ENCODE measurements at regions of chr22 and their contacts with region 1.

Region 1: GRCh38 chr22:41381329-41382097 is at the start of gene TEF:
- DNase-seq: peak; percentile 98
- ATAC-seq: peak; percentile 94
- H3K4me3 Mint-ChIP-seq: peak within 1 kb of the TSS; percentile 79
- H3K27ac Mint-ChIP-seq: peak within 1 kb of the TSS; percentile 91
- H3K4me1 Mint-ChIP-seq: peaks cover 10% of the 10 kb centered on the region
- H3K27me3 Mint-ChIP-seq: no peaks in the 10 kb centered on the region
- total RNA-seq, gene TEF: 1.7 to 2.2 TPM

Region 2: DNA sequence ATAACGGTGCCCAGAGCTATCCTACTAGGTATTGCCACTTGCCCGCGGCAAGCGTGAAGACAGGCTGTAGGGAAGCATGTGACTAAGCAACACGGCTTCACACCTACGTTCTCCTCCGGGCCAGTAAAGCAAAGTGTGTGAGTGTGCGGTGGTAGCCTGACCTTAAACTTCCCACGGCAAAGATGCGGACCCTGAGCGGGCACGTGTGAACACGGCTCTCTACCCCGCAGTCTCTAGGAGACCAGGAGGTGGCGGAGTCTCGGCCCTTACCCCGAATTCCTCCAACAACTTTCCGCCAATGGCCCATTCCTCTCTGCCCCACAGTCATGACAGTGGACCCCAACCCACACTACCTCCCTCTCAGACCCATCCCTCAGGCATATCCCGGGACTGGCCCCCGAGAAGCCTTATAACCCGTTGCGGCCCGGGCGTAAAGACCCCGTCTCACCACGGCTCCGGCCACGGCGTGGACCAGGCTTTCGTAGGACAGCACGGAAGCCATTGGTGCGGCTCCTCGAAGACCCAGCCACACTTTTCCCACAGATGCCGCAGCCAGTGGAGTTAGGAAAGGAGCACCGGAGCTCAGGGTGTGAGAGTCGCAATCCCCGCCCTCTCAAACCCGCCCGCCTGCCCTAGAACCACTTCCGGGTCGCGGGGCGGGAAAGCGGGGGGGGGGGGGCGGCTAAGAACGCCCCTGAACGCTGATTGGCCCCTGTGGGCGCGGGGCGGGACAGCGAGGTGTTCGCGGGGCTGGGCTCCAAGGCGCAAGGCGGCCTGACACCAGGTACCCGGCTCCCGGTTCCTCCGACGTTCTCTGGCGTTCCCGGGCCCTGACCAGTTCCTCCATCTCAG is 562.5 kb before region 1 on chr22 and contains the start of gene SLC25A17:
- CTCF ChIA-PET with region 1: no interaction called
- POLR2A ChIA-PET with region 1: no interaction called
- intact Hi-C with region 1: loop called in 1 of 2 experiments (anchors 1 kb)
- DNase-seq: peak; percentile 93
- ATAC-seq: peak; percentile 93
- H3K4me3 Mint-ChIP-seq: peak within 1 kb of the TSS; percentile 88
- H3K27ac Mint-ChIP-seq: peak within 1 kb of the TSS; percentile 92
- H3K4me1 Mint-ChIP-seq: peaks cover 30% of the 10 kb centered on the region
- H3K27me3 Mint-ChIP-seq: no peaks in the 10 kb centered on the region
- total RNA-seq, gene SLC25A17: 23.3 to 29.7 TPM

Region 3: GRCh38 chr22:40889116-40889515 is 492.4 kb before region 1 on chr22:
- CTCF ChIA-PET with region 1: no interaction called
- POLR2A ChIA-PET with region 1: no interaction called
- intact Hi-C with region 1: no loop called
- DNase-seq: no peak
- ATAC-seq: no peak
- H3K4me3 Mint-ChIP-seq: no peak overlapping the region
- H3K27ac Mint-ChIP-seq: no peak overlapping the region
- H3K4me1 Mint-ChIP-seq: no peaks in the 10 kb centered on the region
- H3K27me3 Mint-ChIP-seq: no peaks in the 10 kb centered on the region

Region 4: GRCh38 chr22:41106122-41106968 is 275.2 kb before region 1 on chr22:
- CTCF ChIA-PET with region 1: no interaction called
- POLR2A ChIA-PET with region 1: no interaction called
- intact Hi-C with region 1: no loop called
- DNase-seq: peak; percentile 17
- ATAC-seq: peak; percentile 63
- H3K4me3 Mint-ChIP-seq: peak overlapping the region; percentile 1
- H3K27ac Mint-ChIP-seq: peak overlapping the region; percentile 84
- H3K4me1 Mint-ChIP-seq: peaks cover 59% of the 10 kb centered on the region
- H3K27me3 Mint-ChIP-seq: no peaks in the 10 kb centered on the region

Region 5: GRCh38 chr22:41197038-41197972 is 184.2 kb before region 1 on chr22:
- CTCF ChIA-PET with region 1: no interaction called
- POLR2A ChIA-PET with region 1: no interaction called
- intact Hi-C with region 1: loop called in 1 of 2 experiments (anchors 2 kb)
- DNase-seq: peak; percentile 89
- ATAC-seq: peak; percentile 82
- H3K4me3 Mint-ChIP-seq: peak overlapping the region; percentile 77
- H3K27ac Mint-ChIP-seq: no peak overlapping the region
- H3K4me1 Mint-ChIP-seq: peaks cover 11% of the 10 kb centered on the region
- H3K27me3 Mint-ChIP-seq: no peaks in the 10 kb centered on the region

Region 6: GRCh38 chr22:41301105-41302020 is 80.2 kb before region 1 on chr22 and contains the start of gene ZC3H7B:
- CTCF ChIA-PET with region 1: no interaction called
- POLR2A ChIA-PET with region 1: no interaction called
- intact Hi-C with region 1: loop called in 1 of 2 experiments (anchors 1 kb)
- DNase-seq: peak; percentile 92
- ATAC-seq: peak; percentile 96
- H3K4me3 Mint-ChIP-seq: peak within 1 kb of the TSS; percentile 74
- H3K27ac Mint-ChIP-seq: peak within 1 kb of the TSS; percentile 76
- H3K4me1 Mint-ChIP-seq: peaks cover 31% of the 10 kb centered on the region
- H3K27me3 Mint-ChIP-seq: no peaks in the 10 kb centered on the region
- total RNA-seq, gene ZC3H7B: 41.7 to 43.4 TPM

Region 7: GRCh38 chr22:41448189-41448808 is 66.8 kb after region 1 on chr22:
- CTCF ChIA-PET with region 1: no interaction called
- POLR2A ChIA-PET with region 1: interaction called, 8 read pairs
- intact Hi-C with region 1: loop called in 1 of 2 experiments (anchors 1 kb)
- DNase-seq: peak; percentile 95
- ATAC-seq: peak; percentile 73
- H3K4me3 Mint-ChIP-seq: peak overlapping the region; percentile 86
- H3K27ac Mint-ChIP-seq: peak overlapping the region; percentile 97
- H3K4me1 Mint-ChIP-seq: peaks cover 8% of the 10 kb centered on the region
- H3K27me3 Mint-ChIP-seq: no peaks in the 10 kb centered on the region

Region 8: GRCh38 chr22:41589391-41590241 is 208.1 kb after region 1 on chr22 and contains the start of gene PMM1:
- CTCF ChIA-PET with region 1: no interaction called
- POLR2A ChIA-PET with region 1: interaction called, 8 read pairs
- intact Hi-C with region 1: loop called in 1 of 2 experiments (anchors 1 kb)
- DNase-seq: peak; percentile 100
- ATAC-seq: peak; percentile 99
- H3K4me3 Mint-ChIP-seq: peak within 1 kb of the TSS; percentile 88
- H3K27ac Mint-ChIP-seq: peak within 1 kb of the TSS; percentile 85
- H3K4me1 Mint-ChIP-seq: peaks cover 15% of the 10 kb centered on the region
- H3K27me3 Mint-ChIP-seq: no peaks in the 10 kb centered on the region
- total RNA-seq, gene PMM1: 30.4 to 37.4 TPM

Region 9: DNA sequence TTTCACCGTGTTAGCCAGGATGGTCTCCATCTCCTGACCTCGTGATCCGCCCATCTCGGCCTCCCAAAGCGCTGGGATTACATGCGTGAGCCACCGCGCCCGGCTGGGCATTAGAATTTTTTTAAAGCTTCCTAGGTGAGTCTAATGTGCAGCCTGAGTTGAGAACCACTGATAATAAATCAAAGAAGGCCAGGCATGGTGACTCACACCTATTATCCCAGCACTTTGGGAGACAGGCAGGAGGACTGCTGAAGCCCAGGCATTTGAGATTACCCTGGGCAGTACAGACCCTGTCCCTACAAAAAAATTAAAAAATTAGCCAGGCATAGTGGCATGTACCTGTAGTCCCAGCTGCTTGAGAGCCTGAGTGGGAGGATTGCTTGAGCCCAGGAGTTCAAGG is 331.5 kb after region 1 on chr22:
- CTCF ChIA-PET with region 1: no interaction called
- POLR2A ChIA-PET with region 1: no interaction called
- intact Hi-C with region 1: no loop called
- DNase-seq: no peak
- ATAC-seq: no peak
- H3K4me3 Mint-ChIP-seq: no peak overlapping the region
- H3K27ac Mint-ChIP-seq: no peak overlapping the region
- H3K4me1 Mint-ChIP-seq: no peaks in the 10 kb centered on the region
- H3K27me3 Mint-ChIP-seq: no peaks in the 10 kb centered on the region